Posterior vena cava (tissue), 2 donors: ENCODE measurements at regions of chr18 and their contacts with region 1.

Region 1: GRCh38 chr18:22789600-22789999 is 143.5 kb upstream of the RBBP8 start:
- DNase-seq: no peak

Region 2: GRCh38 chr18:22742409-22742808 is 47.2 kb before region 1 on chr18:
- intact Hi-C with region 1: no loop called
- DNase-seq: no peak

Region 3: DNA sequence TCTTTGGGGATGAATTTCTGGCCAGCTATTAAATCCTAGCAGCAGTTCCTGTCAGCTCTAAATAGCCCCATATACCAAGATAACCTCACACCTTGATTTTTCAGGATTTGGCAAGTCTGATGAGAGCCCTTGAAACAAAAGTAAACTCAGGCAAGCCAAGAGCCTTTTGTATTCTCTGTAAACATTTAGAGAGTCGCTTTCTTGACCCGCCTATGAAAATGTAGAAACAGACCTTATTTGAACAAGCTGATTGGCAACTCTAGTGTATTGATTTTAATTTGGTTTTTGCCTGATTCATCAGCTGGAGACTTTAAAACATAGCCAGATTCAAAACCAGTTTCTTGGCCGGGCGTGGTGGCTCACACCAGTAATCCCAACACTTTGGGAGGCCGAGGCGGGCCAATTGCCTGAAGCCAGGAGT is 389.1 kb after region 1 on chr18:
- intact Hi-C with region 1: loop called in 1 of 2 experiments (anchors 5 kb)
- DNase-seq: no peak